ENCODE measurements at regions of chr3 and their contacts with region 1.

Region 1: GRCh38 chr3:8111069-8111798 is 390.4 kb upstream of the LMCD1 start:
- DNase-seq: peak in 41 of 42 donors; percentile 38 to 94 (median 80)

Region 2: GRCh38 chr3:7800006-7800780 is 311.0 kb before region 1 on chr3:
- intact Hi-C with region 1: loop called (anchors 5 kb)
- DNase-seq: peak in 1 of 42 donors; percentile 8